Dendritic cell treated with granulocyte-macrophage colony-stimulating factor and Interleukin-4, amounts not matched to agents 40 ng/mL and 50 ng/mL, for 4 days (primary cell): ENCODE measurements at regions of chr2 and their contacts with region 1.

Region 1: GRCh38 chr2:37231241-37232130 is at the starts of genes CEBPZ and NDUFAF7:
- H3K4me3 Mint-ChIP-seq: no peak within 1 kb of the TSS
- H3K27ac Mint-ChIP-seq: no peak within 1 kb of the TSS
- H3K4me1 Mint-ChIP-seq: peaks cover 28% of the 10 kb centered on the region
- H3K27me3 Mint-ChIP-seq: no peaks in the 10 kb centered on the region

Region 2: GRCh38 chr2:37083873-37084794 is 147.4 kb before region 1 on chr2 and contains the starts of genes GPATCH11 and HEATR5B:
- intact Hi-C with region 1: loop called (anchors 10 kb)
- H3K4me3 Mint-ChIP-seq: no peak within 1 kb of the TSS
- H3K27ac Mint-ChIP-seq: no peak within 1 kb of the TSS
- H3K4me1 Mint-ChIP-seq: peaks cover 17% of the 10 kb centered on the region
- H3K27me3 Mint-ChIP-seq: no peaks in the 10 kb centered on the region

Region 3: GRCh38 chr2:37168217-37168981 is 63.1 kb before region 1 on chr2:
- intact Hi-C with region 1: loop called (anchors 2 kb)
- H3K4me3 Mint-ChIP-seq: no peak overlapping the region
- H3K27ac Mint-ChIP-seq: no peak overlapping the region
- H3K4me1 Mint-ChIP-seq: peaks cover 4% of the 10 kb centered on the region
- H3K27me3 Mint-ChIP-seq: no peaks in the 10 kb centered on the region

Region 4: DNA sequence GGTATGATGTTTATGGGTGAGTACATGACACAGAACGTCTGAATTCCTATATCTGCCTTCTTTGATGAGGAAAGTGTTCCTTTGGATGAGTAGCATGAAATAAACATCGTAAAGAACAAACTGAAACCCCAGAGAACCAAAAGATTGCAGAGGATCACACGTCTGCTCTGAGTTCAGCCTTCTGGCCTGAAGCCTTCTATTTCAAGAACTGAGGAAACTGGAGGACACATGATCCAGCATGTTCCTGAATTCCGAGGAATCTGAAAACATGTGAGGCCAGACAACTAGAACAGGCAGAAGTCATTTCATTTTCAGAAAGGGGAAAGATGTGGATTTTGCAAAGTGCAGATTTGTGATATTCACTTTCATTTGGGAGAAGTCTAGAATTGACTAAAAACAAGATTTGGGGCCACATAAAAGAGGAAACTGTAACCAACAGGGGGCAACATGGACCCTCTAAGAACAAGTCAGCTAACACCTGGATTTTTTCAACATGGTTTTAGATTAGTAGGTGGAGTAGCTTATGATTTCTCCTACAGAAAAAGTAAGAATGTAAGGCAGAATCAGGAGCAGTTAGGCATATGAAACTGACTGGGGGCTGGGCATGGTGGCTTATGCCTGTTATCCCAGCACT is 51.4 kb before region 1 on chr2:
- intact Hi-C with region 1: no loop called
- H3K4me3 Mint-ChIP-seq: peak overlapping the region; percentile 2
- H3K27ac Mint-ChIP-seq: peak overlapping the region; percentile 74
- H3K4me1 Mint-ChIP-seq: peaks cover 12% of the 10 kb centered on the region
- H3K27me3 Mint-ChIP-seq: peaks cover 12% of the 10 kb centered on the region

Region 5: GRCh38 chr2:37196320-37197195 is 34.9 kb before region 1 on chr2 and contains the start of gene CEBPZOS:
- intact Hi-C with region 1: loop called (anchors 5 kb)
- H3K4me3 Mint-ChIP-seq: peak within 1 kb of the TSS; percentile 98
- H3K27ac Mint-ChIP-seq: peak within 1 kb of the TSS; percentile 94
- H3K4me1 Mint-ChIP-seq: peaks cover 36% of the 10 kb centered on the region
- H3K27me3 Mint-ChIP-seq: no peaks in the 10 kb centered on the region

Region 6: GRCh38 chr2:37283207-37283606 is 51.7 kb after region 1 on chr2:
- intact Hi-C with region 1: no loop called
- H3K4me3 Mint-ChIP-seq: no peak overlapping the region
- H3K27ac Mint-ChIP-seq: no peak overlapping the region
- H3K4me1 Mint-ChIP-seq: peaks cover 11% of the 10 kb centered on the region
- H3K27me3 Mint-ChIP-seq: no peaks in the 10 kb centered on the region

Region 7: DNA sequence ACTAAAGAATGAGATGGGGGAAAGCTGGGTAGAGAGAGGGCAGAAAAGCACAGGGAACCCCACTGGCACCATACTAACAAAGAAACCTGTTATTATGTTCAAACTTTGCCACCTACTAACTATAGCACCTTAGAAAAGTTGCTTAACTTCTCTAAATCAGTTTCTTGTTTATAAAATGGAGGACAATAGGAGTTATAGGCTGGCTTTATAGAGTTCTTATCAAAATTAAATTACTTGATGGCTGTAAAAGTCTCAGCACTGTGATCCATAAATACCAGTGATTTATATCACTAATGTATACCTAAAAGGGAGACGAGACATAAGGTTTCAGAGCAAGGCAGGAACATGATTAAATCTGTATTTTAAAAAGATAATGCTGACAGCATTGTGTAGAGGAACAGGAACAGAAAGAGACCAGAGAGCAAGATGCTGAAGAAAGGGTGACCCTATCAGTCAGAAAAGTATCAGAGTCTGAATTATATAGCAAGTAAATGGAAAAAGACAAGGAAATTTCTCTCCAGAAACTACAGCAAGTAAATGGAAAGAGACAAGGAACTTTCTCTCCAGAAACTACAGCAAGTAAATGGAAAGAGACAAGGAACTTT is 64.1 kb after region 1 on chr2:
- intact Hi-C with region 1: no loop called
- H3K4me3 Mint-ChIP-seq: no peak overlapping the region
- H3K27ac Mint-ChIP-seq: peak overlapping the region; percentile 25
- H3K4me1 Mint-ChIP-seq: peaks cover 39% of the 10 kb centered on the region
- H3K27me3 Mint-ChIP-seq: no peaks in the 10 kb centered on the region

Region 8: DNA sequence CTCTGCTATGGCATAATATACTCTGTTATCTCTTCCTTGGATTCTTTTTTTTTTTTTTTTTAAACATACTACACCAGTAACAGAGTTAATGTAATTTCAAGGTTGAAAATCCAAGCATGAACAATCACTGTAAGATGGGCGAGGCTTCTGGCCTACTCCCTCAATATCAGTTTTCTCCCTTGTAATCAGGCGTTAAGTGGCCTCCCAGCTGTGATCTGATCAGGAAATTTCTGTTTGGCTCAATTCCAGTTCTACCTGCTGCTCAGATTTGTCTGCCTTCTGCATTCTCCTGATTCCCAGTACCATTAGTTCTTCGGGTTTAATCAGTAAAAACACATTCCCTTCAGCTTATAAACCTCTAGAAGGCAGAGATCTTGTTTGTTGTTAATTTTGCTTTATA is 74.5 kb after region 1 on chr2:
- intact Hi-C with region 1: no loop called
- H3K4me3 Mint-ChIP-seq: no peak overlapping the region
- H3K27ac Mint-ChIP-seq: no peak overlapping the region
- H3K4me1 Mint-ChIP-seq: peaks cover 44% of the 10 kb centered on the region
- H3K27me3 Mint-ChIP-seq: no peaks in the 10 kb centered on the region